CD4-positive, alpha-beta memory T cell (primary cell): ENCODE measurements at regions of chr4 and their contacts with region 1.

Region 1: GRCh38 chr4:68498413-68499007 is 51.2 kb downstream of the TMPRSS11E start:
- DNase-seq: peak; percentile 49 to 64 (median 53)
- H3K4me3 ChIP-seq: no peak overlapping the region
- H3K4me3 Mint-ChIP-seq: no peak overlapping the region
- H3K27ac ChIP-seq: no peak overlapping the region
- H3K27ac Mint-ChIP-seq: no peak overlapping the region
- H3K4me1 ChIP-seq: no peaks in the 10 kb centered on the region
- H3K4me1 Mint-ChIP-seq: peaks cover 4 to 9% (median 5%) of the 10 kb centered on the region in 4 donors
- H3K27me3 ChIP-seq: no peaks in the 10 kb centered on the region
- H3K27me3 Mint-ChIP-seq: no peaks in the 10 kb centered on the region

Region 2: GRCh38 chr4:68271851-68272756 is 226.4 kb before region 1 on chr4:
- CTCF ChIA-PET with region 1: no interaction called
- POLR2A ChIA-PET with region 1: no interaction called
- intact Hi-C with region 1: loop called (anchors 1 kb)
- DNase-seq: peak in 4 of 5 donors; percentile 39 to 42 (median 41)
- H3K4me3 ChIP-seq: no peak overlapping the region
- H3K4me3 Mint-ChIP-seq: peak overlapping the region in 4 of 8 donors; percentile 16 to 63 (median 50)
- H3K27ac ChIP-seq: no peak overlapping the region
- H3K27ac Mint-ChIP-seq: no peak overlapping the region
- H3K4me1 ChIP-seq: no peaks in the 10 kb centered on the region
- H3K4me1 Mint-ChIP-seq: peaks cover 0 to 4% (median 1%) of the 10 kb centered on the region in 4 donors
- H3K27me3 ChIP-seq: no peaks in the 10 kb centered on the region
- H3K27me3 Mint-ChIP-seq: peaks cover 7 to 8% of the 10 kb centered on the region in 2 donors

Region 3: GRCh38 chr4:68476191-68476590 is 22.3 kb before region 1 on chr4:
- CTCF ChIA-PET with region 1: no interaction called
- POLR2A ChIA-PET with region 1: no interaction called
- intact Hi-C with region 1: no loop called
- DNase-seq: no peak
- H3K4me3 ChIP-seq: no peak overlapping the region
- H3K4me3 Mint-ChIP-seq: no peak overlapping the region
- H3K27ac ChIP-seq: no peak overlapping the region
- H3K27ac Mint-ChIP-seq: peak overlapping the region in 1 of 7 donors; percentile 22
- H3K4me1 ChIP-seq: no peaks in the 10 kb centered on the region
- H3K4me1 Mint-ChIP-seq: no peaks in the 10 kb centered on the region
- H3K27me3 ChIP-seq: no peaks in the 10 kb centered on the region
- H3K27me3 Mint-ChIP-seq: no peaks in the 10 kb centered on the region

Region 4: GRCh38 chr4:69025191-69025998 is 526.9 kb after region 1 on chr4:
- CTCF ChIA-PET with region 1: no interaction called
- POLR2A ChIA-PET with region 1: no interaction called
- intact Hi-C with region 1: loop called (anchors 10 kb)
- DNase-seq: no peak
- H3K4me3 ChIP-seq: no peak overlapping the region
- H3K4me3 Mint-ChIP-seq: no peak overlapping the region
- H3K27ac ChIP-seq: no peak overlapping the region
- H3K27ac Mint-ChIP-seq: no peak overlapping the region
- H3K4me1 ChIP-seq: no peaks in the 10 kb centered on the region
- H3K4me1 Mint-ChIP-seq: no peaks in the 10 kb centered on the region
- H3K27me3 ChIP-seq: no peaks in the 10 kb centered on the region
- H3K27me3 Mint-ChIP-seq: no peaks in the 10 kb centered on the region

Region 5: GRCh38 chr4:69689599-69689998 is 1191.1 kb after region 1 on chr4:
- CTCF ChIA-PET with region 1: no interaction called
- POLR2A ChIA-PET with region 1: no interaction called
- intact Hi-C with region 1: loop called (anchors 5 kb)
- DNase-seq: peak in 4 of 5 donors; percentile 12 to 38 (median 33)
- H3K4me3 ChIP-seq: no peak overlapping the region
- H3K4me3 Mint-ChIP-seq: peak overlapping the region in 3 of 8 donors; percentile 34 to 58 (median 45)
- H3K27ac ChIP-seq: no peak overlapping the region
- H3K27ac Mint-ChIP-seq: no peak overlapping the region
- H3K4me1 ChIP-seq: no peaks in the 10 kb centered on the region
- H3K4me1 Mint-ChIP-seq: peaks cover 0 to 5% (median 3%) of the 10 kb centered on the region in 4 donors
- H3K27me3 ChIP-seq: no peaks in the 10 kb centered on the region
- H3K27me3 Mint-ChIP-seq: no peaks in the 10 kb centered on the region

Region 6: DNA sequence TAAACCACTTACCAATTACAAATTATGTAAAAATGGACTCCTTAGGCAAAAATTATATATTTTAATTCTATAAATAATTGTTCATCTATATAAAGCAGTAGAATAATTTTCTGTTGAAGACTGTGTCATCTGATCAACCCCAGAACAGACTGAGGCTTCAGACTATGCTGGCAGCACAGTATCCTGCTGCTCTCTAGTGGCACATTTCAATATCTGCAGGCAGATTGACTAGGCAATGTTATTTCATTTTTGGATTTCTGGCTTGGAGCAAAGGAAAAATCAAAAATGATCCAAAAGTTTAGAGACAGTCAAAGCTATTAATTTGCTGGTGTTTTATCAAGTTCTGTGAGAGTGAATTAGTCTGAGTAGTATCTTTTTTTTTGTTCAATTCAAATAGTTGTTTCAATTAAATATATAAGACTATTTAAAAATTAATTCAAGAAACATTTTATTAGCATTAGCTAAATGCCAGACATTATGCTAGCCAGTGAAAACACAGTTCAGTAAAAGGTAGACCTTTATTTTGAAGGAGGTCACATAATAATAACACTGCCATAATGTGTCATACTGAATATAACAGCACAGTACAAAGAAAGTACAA is 1382.8 kb after region 1 on chr4:
- CTCF ChIA-PET with region 1: no interaction called
- POLR2A ChIA-PET with region 1: no interaction called
- intact Hi-C with region 1: loop called (anchors 5 kb)
- DNase-seq: peak in 4 of 5 donors; percentile 10 to 32 (median 25)
- H3K4me3 ChIP-seq: no peak overlapping the region
- H3K4me3 Mint-ChIP-seq: no peak overlapping the region
- H3K27ac ChIP-seq: no peak overlapping the region
- H3K27ac Mint-ChIP-seq: no peak overlapping the region
- H3K4me1 ChIP-seq: no peaks in the 10 kb centered on the region
- H3K4me1 Mint-ChIP-seq: no peaks in the 10 kb centered on the region
- H3K27me3 ChIP-seq: no peaks in the 10 kb centered on the region
- H3K27me3 Mint-ChIP-seq: no peaks in the 10 kb centered on the region